A673 (cell line): ENCODE measurements at regions of chr14 and their contacts with region 1.

Region 1: GRCh38 chr14:92748259-92749016 is at the start of gene LGMN:
- DNase-seq: peak; percentile 97
- H3K4me3 ChIP-seq: peak within 1 kb of the TSS; percentile 83
- H3K27ac ChIP-seq: peak within 1 kb of the TSS; percentile 77
- H3K4me1 ChIP-seq: peaks cover 6% of the 10 kb centered on the region
- H3K27me3 ChIP-seq: no peaks in the 10 kb centered on the region
- CTCF ChIP-seq: no peak
- total RNA-seq, gene LGMN: 34.6 and 39.8 TPM in 2 replicates

Region 2: DNA sequence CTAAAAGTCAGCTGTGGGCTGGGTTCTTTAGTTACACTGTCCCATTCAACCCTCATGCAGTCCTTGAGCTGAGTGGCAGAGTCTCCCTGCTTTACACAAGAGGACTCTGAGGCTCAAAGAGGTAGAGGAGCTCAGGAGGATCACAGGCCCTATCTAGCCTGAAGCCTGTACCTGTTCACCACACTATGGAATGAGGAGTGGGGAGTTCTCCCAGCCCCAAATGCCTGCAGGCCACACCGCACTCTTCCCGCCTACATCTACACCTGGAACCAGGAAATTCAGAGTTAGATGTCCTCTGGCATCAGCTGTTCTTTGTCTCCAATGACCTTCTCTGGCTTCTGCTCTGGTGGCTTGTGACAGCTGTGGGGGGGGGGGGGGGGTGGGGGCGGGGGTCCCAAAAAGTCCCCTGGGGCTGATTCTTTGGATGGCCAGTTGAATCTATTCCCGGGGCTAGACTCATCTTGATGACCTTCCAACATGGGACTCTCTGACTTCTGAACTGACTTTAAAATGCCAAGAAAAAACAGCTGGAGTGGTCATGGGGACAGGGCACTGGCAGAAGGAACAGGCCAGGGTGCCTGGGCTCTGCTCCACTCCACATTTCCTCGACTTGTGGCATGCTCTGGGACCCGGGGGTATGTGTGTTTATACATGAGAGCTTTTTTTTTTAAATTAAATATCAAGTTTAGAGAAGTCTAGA is 204.2 kb before region 1 on chr14:
- CTCF ChIA-PET with region 1: no interaction called
- POLR2A ChIA-PET with region 1: interaction called, 10 read pairs
- intact Hi-C with region 1: no loop called
- DNase-seq: no peak
- H3K4me3 ChIP-seq: no peak overlapping the region
- H3K27ac ChIP-seq: no peak overlapping the region
- H3K4me1 ChIP-seq: no peaks in the 10 kb centered on the region
- H3K27me3 ChIP-seq: no peaks in the 10 kb centered on the region
- CTCF ChIP-seq: no peak

Region 3: DNA sequence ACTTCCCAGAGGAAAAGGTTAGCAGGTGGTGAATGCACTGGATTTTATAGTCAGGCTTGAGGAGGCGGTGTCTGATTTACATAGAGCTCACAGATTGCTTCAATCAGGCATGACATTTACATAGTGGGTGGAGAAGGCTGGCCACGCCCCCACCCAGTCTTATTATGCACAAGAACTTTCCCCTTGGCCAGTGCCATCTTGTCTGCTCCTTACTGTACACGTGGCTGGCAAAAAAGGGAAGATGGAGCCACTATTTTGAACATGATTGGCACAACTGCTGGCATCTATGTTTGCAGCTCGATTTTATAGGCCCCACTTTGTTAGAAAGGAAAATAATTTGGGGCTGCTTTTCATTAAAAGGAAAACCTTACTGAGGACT is 10.9 kb after region 1 on chr14:
- CTCF ChIA-PET with region 1: no interaction called
- POLR2A ChIA-PET with region 1: no interaction called
- intact Hi-C with region 1: no loop called
- DNase-seq: peak; percentile 81
- H3K4me3 ChIP-seq: no peak overlapping the region
- H3K27ac ChIP-seq: no peak overlapping the region
- H3K4me1 ChIP-seq: peaks cover 3% of the 10 kb centered on the region
- H3K27me3 ChIP-seq: no peaks in the 10 kb centered on the region
- CTCF ChIP-seq: no peak

Region 4: DNA sequence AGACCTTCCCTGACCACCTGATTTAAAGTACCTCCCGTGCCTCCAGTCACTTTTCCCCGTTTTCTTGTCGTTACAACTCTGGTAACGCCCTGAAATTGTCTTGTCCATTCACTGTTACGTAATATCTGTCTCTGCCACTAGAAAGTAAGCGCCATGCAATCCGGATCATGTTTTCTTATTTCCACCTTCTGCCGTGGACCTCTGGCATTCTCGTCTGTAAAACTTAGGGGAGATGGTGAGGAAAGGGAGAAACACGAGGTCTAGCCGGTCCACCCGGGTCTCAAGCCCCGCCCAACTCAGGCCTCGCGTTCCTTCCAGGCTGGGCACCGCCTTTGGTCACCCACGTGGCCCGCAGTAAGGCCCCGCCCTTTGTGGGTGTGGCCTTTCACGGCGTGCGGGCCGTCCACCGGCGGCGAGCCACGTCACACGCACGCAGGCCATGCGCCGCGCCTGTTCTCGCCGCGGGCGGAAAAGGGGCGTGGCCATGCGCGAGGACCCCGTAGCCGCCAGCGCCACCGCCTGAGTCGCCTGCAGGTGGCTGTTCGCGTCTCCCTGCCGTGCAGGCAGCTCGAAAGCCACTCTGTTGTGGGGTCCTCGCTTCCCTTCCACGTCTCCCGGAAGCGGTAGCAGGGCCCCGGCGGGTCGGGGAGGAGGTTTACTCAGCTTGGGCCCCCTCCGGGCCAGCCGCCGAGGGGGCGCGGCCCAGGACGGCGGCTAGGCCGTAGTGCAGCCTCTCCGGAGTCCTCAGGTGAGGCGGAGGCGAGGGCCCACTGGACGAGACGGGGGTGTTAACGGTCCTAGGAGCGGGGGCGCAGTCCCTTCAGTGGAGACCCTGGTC is 45.5 kb after region 1 on chr14 and contains the start of gene GOLGA5:
- CTCF ChIA-PET with region 1: no interaction called
- POLR2A ChIA-PET with region 1: no interaction called
- intact Hi-C with region 1: loop called (anchors 5 kb)
- DNase-seq: peak; percentile 96
- H3K4me3 ChIP-seq: peak within 1 kb of the TSS; percentile 64
- H3K27ac ChIP-seq: peak within 1 kb of the TSS; percentile 80
- H3K4me1 ChIP-seq: peaks cover 5% of the 10 kb centered on the region
- H3K27me3 ChIP-seq: no peaks in the 10 kb centered on the region
- CTCF ChIP-seq: no peak
- total RNA-seq, gene GOLGA5: 21.3 and 24.4 TPM in 2 replicates

Region 5: DNA sequence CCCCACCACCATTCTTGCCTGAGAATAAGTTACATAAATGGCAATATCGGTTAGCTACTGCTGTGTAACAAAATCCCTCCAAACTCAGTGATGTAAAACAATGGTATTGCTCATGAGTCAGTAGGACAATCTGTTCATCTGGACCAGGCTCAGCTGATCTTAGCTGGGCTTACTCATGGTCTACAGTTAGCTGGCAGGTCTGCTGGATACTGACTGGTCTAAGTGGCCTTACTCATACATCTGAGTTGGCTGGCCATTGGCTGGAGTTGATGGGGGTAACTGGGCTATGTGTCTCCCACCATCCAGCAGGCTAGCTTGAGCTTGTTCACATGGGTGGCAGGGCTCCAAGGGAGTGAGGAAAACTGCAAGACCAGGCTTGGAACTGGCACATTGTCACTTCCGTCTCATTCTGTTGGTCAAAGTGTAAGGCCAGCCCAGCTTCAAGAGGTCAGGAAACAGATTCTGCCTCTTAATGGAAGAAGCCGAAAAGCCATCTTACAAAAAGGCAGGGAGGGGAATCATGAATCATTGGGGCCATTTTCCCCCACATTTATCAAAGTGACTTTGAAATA is 117.8 kb after region 1 on chr14:
- CTCF ChIA-PET with region 1: no interaction called
- POLR2A ChIA-PET with region 1: no interaction called
- intact Hi-C with region 1: no loop called
- DNase-seq: no peak
- H3K4me3 ChIP-seq: no peak overlapping the region
- H3K27ac ChIP-seq: no peak overlapping the region
- H3K4me1 ChIP-seq: no peaks in the 10 kb centered on the region
- H3K27me3 ChIP-seq: no peaks in the 10 kb centered on the region
- CTCF ChIP-seq: no peak